ENCODE measurements at regions of chr2 and their contacts with region 1.

Region 1: DNA sequence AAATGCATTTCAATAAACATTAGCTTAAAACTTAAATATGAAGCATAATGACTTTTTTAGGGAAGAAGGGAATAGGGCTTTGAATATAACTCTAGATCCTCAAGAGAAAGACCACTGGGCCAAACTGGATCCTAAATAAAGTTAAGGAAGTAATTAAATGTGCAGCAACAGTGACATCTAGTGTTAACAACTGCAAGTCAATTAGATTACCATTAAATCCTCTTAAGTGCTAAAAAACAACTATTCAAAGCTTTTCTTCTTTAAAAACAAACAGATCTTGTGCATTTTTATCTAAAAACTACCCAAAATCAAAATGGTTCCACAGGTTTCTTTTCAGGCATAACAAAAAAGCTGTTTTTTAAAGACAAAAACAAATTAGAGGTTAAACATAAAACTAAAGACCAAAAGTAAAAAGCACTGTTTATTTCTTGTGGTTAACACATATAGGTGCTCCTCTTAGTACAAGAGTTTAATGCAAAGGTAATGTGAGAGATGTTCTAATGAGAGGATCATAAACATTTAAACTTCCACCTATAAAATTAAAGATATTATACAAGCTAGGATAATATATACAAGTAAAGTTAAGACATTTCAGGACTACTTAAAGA is 111.4 kb downstream of the THADA start:
- DNase-seq: no peak
- H3K4me3 Mint-ChIP-seq: no peak overlapping the region
- H3K27ac Mint-ChIP-seq: no peak overlapping the region
- H3K4me1 Mint-ChIP-seq: no peaks in the 10 kb centered on the region
- H3K27me3 Mint-ChIP-seq: no peaks in the 10 kb centered on the region

Region 2: DNA sequence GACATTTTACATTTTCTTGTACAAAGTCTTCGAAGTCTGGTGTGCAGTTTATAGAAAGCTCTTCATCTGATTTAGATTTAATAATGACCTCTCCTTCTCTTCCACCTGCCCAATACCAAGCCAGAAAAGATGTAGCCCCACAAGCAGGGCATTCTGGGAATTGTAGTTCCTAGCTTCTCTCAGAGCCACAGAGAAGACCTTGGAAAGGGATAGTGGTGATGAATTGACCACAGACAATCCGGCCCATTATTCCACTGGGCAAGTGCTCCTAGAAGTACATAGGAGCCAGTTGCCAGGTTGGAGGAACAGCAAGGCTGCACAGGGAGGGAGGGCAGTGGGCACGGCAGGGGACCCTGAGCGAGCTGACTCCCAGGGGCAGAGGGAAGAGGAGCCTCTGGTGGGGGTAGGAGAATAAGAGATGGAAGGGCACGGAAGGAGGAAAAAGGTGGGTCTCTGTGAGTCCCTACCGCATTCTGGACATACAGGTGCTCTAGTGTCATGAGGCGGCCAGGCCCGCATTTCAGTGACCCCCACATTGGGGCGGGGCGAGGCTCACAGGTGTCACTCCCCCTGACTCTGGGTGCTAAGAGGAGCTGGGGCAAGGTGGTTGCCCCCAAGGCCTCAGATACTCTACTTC is 539.5 kb before region 1 on chr2:
- CTCF ChIA-PET with region 1: interaction called, 49 read pairs
- DNase-seq: no peak
- H3K4me3 Mint-ChIP-seq: no peak overlapping the region
- H3K27ac Mint-ChIP-seq: no peak overlapping the region
- H3K4me1 Mint-ChIP-seq: peaks cover 3% of the 10 kb centered on the region
- H3K27me3 Mint-ChIP-seq: peaks cover 17% of the 10 kb centered on the region

Region 3: GRCh38 chr2:42974721-42975717 is 509.4 kb before region 1 on chr2:
- CTCF ChIA-PET with region 1: interaction called, 32 read pairs
- DNase-seq: peak; percentile 70
- H3K4me3 Mint-ChIP-seq: no peak overlapping the region
- H3K27ac Mint-ChIP-seq: no peak overlapping the region
- H3K4me1 Mint-ChIP-seq: peaks cover 24% of the 10 kb centered on the region
- H3K27me3 Mint-ChIP-seq: peaks cover 30% of the 10 kb centered on the region

Region 4: DNA sequence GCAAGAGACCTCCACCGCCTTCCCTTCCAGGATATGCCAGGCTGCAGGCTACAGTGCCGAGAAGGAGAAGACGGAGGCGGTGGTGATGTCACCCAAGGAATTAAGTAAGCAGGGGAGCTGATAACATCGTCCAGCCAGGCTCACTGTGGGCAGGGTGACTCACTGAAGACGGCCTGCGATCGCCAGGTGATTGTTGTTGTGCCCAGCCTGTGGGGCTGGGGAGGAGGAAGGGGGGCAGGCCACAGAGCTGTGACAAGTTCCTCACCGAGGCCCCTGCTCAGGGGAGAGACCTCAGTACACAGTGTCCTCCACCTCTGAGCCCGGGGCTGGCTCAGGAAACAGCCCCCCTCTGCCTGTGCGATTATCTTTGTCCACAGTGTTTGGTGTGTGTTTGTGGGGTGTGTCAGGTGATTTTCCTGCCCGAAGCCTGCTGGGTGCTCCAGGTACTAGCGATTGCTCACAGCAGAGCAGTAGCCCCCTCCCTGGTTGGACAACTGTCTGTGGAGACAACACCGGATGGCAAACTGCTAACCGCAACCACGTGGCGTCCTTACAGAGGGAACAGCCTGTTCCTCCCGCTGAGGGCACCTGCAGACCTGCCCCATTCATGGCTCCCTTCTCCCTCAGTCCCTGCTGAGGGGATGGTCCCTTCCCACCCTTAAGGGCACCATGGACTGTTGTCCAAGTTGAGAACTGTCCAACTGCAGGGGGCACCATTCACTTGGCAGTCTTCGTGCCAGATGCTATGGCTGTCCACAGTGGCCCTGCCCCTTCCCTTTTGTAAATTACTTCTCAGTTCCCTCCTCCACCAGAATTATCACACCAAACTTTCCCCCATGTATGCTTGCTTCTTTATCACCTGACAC is 353.2 kb before region 1 on chr2:
- CTCF ChIA-PET with region 1: interaction called, 44 read pairs
- DNase-seq: peak; percentile 94
- H3K4me3 Mint-ChIP-seq: peak overlapping the region; percentile 56
- H3K27ac Mint-ChIP-seq: peak overlapping the region; percentile 99
- H3K4me1 Mint-ChIP-seq: peaks cover 91% of the 10 kb centered on the region
- H3K27me3 Mint-ChIP-seq: no peaks in the 10 kb centered on the region

Region 5: GRCh38 chr2:43507137-43507536 is 22.7 kb after region 1 on chr2:
- CTCF ChIA-PET with region 1: no interaction called
- DNase-seq: no peak
- H3K4me3 Mint-ChIP-seq: no peak overlapping the region
- H3K27ac Mint-ChIP-seq: no peak overlapping the region
- H3K4me1 Mint-ChIP-seq: peaks cover 16% of the 10 kb centered on the region
- H3K27me3 Mint-ChIP-seq: no peaks in the 10 kb centered on the region

Region 6: DNA sequence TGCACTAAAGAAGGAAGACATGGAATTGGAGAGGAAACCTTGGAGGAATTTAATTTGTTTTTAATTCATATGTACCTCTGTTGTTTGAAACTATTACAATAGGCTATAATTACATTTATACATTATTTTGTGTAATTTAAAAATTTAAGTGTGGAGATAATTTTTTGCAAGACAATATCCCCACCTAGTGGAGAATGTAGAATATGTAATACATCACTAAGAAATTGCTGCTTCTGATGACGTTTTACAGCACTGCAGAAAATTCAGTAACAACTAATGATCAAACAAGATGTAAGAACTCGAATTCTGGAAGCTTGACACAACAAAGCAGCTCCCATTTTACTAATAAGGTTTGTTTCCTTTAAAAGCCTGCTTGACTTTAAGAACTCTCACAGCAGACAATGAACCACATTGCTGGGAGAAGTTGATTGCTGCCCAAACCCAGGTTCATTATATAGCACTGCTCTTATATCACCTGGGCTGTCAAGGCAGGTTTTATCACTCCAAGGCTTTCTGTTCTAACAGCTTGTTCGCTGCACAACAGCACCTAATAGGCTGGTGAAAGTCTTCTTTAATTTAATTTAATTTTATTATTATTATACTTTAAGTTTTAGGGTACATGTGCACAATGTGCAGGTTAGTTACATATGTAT is 58.0 kb after region 1 on chr2:
- CTCF ChIA-PET with region 1: interaction called, 11 read pairs
- DNase-seq: no peak
- H3K4me3 Mint-ChIP-seq: no peak overlapping the region
- H3K27ac Mint-ChIP-seq: no peak overlapping the region
- H3K4me1 Mint-ChIP-seq: peaks cover 8% of the 10 kb centered on the region
- H3K27me3 Mint-ChIP-seq: no peaks in the 10 kb centered on the region

Region 7: DNA sequence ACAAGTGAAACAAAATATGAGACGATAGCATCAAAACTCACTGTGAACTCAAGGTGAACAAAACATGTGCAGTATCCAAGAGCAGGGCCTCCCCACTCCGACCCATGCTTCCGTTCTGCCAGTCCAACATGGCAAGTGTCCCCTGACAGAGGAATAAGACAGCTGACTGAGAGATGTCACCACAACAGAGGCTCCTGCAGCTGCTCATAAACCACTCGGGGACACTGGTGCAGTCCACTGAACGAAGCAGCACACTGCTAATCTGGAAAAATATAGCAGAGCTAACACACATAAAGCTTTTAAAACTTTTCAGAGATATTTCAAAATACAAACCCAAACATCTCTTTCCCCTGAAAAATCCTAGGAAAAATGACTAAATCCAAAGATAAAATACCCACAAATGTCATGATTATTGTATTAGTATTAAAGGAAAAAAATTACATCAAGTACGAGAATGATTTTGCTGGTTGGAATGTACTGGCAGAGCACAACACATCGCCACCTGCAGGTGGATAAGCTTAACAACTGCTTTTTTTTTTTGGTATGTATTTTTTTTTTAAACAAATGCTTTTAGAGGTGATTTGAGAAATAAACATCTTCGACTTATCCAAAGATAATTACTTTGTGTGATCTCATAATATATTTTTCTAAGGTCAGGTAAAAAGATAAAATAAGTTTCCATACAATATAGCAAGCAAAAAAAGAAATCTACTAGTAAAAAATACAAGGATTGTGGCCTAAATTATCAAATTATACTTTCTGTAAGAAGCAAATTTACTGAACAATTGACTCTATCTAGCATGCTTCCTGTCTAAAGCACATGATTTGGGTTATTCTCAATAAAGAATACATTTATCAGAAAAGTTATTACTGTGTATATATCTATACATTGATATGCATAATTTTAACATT is 92.8 kb after region 1 on chr2:
- CTCF ChIA-PET with region 1: interaction called, 10 read pairs
- DNase-seq: peak; percentile 44
- H3K4me3 Mint-ChIP-seq: no peak overlapping the region
- H3K27ac Mint-ChIP-seq: no peak overlapping the region
- H3K4me1 Mint-ChIP-seq: peaks cover 12% of the 10 kb centered on the region
- H3K27me3 Mint-ChIP-seq: no peaks in the 10 kb centered on the region